Activated T-helper 1 cell treated with anti-CD3 and anti-CD28 coated beads, Interleukin-12 subunit alpha, Interleukin-12 subunit beta, Interleukin-2, Interleukin-4 antibody, amounts not matched to agents 30 ng/mL and 10 ng/mL and 1 ng/mL, durations not matched to agents 14 hours and 24 hours and 36 hours (primary cell): ENCODE measurements at regions of chr6 and their contacts with region 1.

Region 1: DNA sequence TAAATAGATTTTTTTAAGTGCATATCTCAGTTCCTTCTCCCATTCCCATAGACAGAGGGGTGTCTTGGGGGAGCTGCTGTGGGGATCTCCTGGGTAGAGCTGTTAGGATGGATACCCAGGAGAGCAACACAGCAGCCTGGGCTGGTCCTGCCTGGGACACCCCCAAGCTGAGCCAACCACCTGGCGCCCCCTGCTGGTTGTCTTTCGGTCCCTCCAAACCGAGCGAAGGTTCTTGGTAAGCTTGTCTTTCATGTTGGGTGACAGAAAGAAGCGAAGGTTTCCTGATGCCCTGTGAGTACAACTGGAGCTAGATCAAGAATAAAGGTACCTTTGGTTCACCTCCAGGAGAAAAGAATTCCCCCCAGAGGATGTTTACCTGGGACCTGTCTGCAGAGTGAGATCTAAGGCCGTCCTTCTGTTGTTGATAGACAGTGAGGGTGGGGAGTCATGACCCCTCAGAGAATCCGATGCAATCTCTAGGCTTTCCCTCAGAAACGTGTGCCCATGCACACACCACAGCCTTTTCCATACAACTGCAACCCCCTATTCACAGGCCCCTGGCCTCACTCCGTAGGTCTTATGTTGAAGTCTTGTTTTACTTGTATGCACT is 50.8 kb downstream of the SNX9 start:
- DNase-seq: peak; percentile 69
- H3K4me3 Mint-ChIP-seq: no peak overlapping the region
- H3K27ac Mint-ChIP-seq: no peak overlapping the region
- H3K4me1 Mint-ChIP-seq: peaks cover 29% of the 10 kb centered on the region
- H3K27me3 Mint-ChIP-seq: no peaks in the 10 kb centered on the region

Region 2: DNA sequence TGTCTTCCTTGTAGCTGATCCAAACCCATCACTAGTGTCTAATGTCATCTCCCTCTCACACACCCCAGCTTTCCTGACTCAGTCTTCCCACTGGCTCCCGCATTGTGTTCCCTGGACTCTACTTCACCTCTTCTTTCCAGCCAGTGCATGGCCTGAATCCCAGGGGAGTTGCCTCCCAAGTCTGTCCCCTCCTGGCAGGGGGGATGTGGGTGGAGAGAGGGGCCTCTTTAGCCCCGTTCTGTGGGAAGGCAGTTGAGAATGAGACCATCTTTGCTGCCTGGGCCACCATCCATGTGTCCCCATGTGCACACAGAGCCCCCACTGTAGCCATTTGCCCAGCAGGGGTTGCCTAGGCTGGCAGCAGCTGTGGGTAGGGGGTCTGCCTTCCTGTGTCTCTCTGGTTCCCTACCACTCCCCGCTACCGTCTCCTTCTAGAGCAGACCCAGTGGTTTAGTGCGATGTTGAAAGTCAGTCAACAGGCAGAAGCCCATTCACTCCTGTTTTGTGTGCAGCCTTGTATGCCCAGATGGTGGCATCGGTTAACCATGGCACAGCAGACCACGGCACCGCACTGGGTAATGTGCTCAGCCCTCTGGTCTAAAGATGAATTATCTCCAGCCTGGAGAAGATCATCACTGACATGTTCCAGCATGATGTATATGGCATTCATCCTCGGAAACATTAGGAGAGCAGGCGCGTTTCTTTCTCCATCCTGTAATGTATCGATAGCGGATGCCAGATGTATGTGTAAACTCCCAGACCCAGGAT is 229.6 kb before region 1 on chr6:
- intact Hi-C with region 1: loop called (anchors 1 kb)
- DNase-seq: no peak
- H3K4me3 Mint-ChIP-seq: no peak overlapping the region
- H3K27ac Mint-ChIP-seq: no peak overlapping the region
- H3K4me1 Mint-ChIP-seq: peaks cover 24% of the 10 kb centered on the region
- H3K27me3 Mint-ChIP-seq: no peaks in the 10 kb centered on the region

Region 3: GRCh38 chr6:157667211-157668008 is 206.4 kb before region 1 on chr6:
- intact Hi-C with region 1: loop called (anchors 2 kb)
- DNase-seq: peak; percentile 30
- H3K4me3 Mint-ChIP-seq: no peak overlapping the region
- H3K27ac Mint-ChIP-seq: peak overlapping the region; percentile 41
- H3K4me1 Mint-ChIP-seq: peaks cover 12% of the 10 kb centered on the region
- H3K27me3 Mint-ChIP-seq: peaks cover 10% of the 10 kb centered on the region

Region 4: GRCh38 chr6:157800420-157801237 is 73.2 kb before region 1 on chr6:
- intact Hi-C with region 1: loop called (anchors 2 kb)
- DNase-seq: peak; percentile 29
- H3K4me3 Mint-ChIP-seq: peak overlapping the region; percentile 45
- H3K27ac Mint-ChIP-seq: peak overlapping the region; percentile 84
- H3K4me1 Mint-ChIP-seq: peaks cover 62% of the 10 kb centered on the region
- H3K27me3 Mint-ChIP-seq: peaks cover 34% of the 10 kb centered on the region